Uterus (tissue), 4 donors: ENCODE measurements at regions of chr2 and their contacts with region 1.

Region 1: DNA sequence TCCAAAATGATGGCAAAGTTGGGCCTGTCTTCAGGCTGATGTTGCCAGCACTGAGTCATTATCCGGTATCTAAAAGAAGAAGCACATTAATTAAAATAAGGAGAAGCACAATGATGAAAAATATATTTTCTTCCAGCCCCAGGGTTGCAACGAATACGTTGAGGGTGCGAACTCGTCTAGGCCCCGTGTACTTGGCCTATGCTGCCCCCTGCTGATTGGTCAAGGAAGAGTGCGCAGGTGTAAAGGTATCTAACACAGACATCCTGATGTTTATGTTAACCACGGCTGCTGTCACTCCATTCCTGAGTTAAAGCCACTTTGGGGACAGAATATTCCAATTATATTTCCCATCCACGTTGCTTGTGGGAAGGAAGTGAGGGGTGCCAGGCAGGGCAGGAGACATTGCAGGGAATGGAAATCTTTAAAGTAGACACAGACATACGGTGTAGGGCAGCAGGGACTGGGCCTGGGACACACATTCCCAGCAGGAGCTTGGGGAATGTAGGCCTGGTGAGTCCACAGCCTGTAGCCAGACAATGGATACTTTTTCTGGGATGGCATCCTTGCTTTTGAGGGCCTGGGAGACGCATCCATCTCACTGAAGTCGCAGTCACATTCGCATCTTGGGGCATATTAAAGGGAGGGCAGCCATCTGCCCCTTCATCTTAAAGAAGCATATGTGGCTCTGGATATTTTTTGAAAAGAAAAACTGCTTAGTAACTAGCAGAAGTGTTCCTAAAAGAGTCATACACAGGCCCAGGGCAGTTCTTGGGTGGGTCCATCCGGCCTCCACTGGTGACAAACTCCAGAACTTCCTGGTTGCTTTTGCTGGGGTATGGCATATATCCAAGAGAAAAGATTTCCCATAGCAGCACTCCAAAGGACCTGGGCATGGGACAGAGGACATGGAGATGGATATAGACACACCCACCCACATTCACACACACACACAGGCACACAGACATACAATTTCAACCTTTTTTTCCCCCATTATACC is 81.9 kb downstream of the CLIP4 start:
- DNase-seq: peak; percentile 52 to 58
- H3K4me3 ChIP-seq: no peak overlapping the region
- H3K27ac ChIP-seq: no peak overlapping the region
- H3K4me1 ChIP-seq: no peaks in the 10 kb centered on the region
- H3K27me3 ChIP-seq: no peaks in the 10 kb centered on the region
- CTCF ChIP-seq: peak; percentile 61 to 76 (median 68)
- POLR2A ChIP-seq: no peak

Region 2: GRCh38 chr2:28488858-28489575 is 708.1 kb before region 1 on chr2:
- intact Hi-C with region 1: no loop called
- DNase-seq: no peak
- H3K4me3 ChIP-seq: no peak overlapping the region
- H3K27ac ChIP-seq: no peak overlapping the region
- H3K4me1 ChIP-seq: no peaks in the 10 kb centered on the region
- H3K27me3 ChIP-seq: no peaks in the 10 kb centered on the region
- CTCF ChIP-seq: no peak
- POLR2A ChIP-seq: no peak

Region 3: DNA sequence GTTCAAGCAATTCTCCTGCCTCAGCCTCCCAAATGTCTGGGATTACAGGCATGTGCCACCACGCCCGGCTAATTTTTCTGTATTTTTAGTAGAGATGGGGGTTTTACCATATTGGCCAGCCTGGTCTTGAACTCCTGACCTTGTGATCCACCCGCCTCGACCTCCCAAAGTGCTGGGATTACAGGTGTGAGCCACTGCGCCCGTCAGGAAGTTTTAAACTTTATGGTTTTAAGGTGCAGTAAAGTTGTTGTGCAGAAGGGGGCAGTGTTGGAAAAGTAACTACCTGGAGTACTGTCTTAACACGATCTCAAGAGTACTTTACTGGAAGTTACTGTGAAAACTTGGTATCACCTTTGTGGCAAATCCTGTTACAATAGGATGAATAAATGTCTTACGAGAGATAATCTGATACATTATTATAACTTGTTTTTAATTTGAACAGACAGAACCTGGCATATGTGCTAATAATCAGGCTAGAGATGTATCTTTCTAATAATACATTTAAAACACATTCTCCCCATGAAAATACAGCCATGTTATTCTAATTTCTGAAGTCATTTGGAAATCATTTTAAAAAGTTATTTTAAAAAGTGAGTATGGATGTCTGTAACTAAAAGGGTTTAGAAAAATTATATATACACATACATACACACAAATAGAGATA is 375.7 kb before region 1 on chr2:
- intact Hi-C with region 1: loop called (anchors 10 kb)
- DNase-seq: peak in 1 of 2 donors; percentile 54
- H3K4me3 ChIP-seq: no peak overlapping the region
- H3K27ac ChIP-seq: peak overlapping the region; percentile 6 to 11
- H3K4me1 ChIP-seq: no peaks in the 10 kb centered on the region
- H3K27me3 ChIP-seq: no peaks in the 10 kb centered on the region
- CTCF ChIP-seq: peak; percentile 58 to 75 (median 66)
- POLR2A ChIP-seq: no peak

Region 4: GRCh38 chr2:28958689-28959088 is 238.4 kb before region 1 on chr2:
- intact Hi-C with region 1: loop called (anchors 10 kb)
- DNase-seq: peak; percentile 33 to 44
- H3K4me3 ChIP-seq: no peak overlapping the region
- H3K27ac ChIP-seq: no peak overlapping the region
- H3K4me1 ChIP-seq: no peaks in the 10 kb centered on the region
- H3K27me3 ChIP-seq: no peaks in the 10 kb centered on the region
- CTCF ChIP-seq: peak; percentile 62 to 76 (median 67)
- POLR2A ChIP-seq: no peak

Region 5: GRCh38 chr2:29113891-29114321 is 83.2 kb before region 1 on chr2:
- intact Hi-C with region 1: no loop called
- DNase-seq: peak; percentile 18
- H3K4me3 ChIP-seq: no peak overlapping the region
- H3K27ac ChIP-seq: no peak overlapping the region
- H3K4me1 ChIP-seq: no peaks in the 10 kb centered on the region
- H3K27me3 ChIP-seq: no peaks in the 10 kb centered on the region
- CTCF ChIP-seq: no peak
- POLR2A ChIP-seq: no peak